ENCODE measurements at regions of chr2 and their contacts with region 1.

Region 1: DNA sequence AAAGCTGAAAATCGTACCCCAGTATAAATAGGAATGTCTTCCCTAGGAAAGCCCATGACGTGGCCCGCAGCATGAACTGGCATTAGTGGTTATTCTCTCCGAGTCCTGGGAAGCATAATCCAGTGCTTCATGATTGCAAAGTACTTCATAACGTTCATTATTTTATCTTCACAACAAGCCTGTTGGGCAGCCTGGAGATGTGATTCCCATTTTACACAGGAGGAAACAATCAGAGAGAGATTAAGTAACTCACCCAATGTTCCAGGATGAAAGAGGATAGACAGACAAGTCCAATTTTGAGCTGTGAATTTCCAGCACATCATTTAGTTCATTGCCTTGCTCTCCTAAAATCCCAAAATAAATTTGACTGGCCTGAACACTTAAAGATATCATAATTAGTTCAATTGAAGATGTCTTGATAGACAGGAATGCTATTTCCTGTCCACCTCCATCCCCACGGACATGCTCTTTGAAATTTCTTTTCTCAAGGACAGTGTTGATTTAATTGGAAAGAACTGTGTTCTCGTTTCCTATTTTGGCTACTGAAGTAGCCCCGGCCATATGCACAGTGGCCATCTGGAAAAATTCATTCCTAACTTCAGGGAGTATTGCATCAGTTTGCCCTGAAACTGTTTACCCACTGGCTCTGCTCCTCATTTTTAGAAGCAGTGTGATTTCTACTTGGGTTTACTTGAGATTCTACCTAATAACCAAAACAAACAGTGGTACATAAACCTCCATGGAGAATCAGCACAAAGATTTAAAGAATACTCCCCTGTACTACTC is 93.9 kb downstream of the VWC2L start:
- DNase-seq: no peak
- H3K4me3 ChIP-seq: no peak overlapping the region
- H3K27ac ChIP-seq: no peak overlapping the region
- H3K4me1 ChIP-seq: no peaks in the 10 kb centered on the region
- H3K27me3 ChIP-seq: no peaks in the 10 kb centered on the region
- CTCF ChIP-seq: no peak
- POLR2A ChIP-seq: no peak

Region 2: DNA sequence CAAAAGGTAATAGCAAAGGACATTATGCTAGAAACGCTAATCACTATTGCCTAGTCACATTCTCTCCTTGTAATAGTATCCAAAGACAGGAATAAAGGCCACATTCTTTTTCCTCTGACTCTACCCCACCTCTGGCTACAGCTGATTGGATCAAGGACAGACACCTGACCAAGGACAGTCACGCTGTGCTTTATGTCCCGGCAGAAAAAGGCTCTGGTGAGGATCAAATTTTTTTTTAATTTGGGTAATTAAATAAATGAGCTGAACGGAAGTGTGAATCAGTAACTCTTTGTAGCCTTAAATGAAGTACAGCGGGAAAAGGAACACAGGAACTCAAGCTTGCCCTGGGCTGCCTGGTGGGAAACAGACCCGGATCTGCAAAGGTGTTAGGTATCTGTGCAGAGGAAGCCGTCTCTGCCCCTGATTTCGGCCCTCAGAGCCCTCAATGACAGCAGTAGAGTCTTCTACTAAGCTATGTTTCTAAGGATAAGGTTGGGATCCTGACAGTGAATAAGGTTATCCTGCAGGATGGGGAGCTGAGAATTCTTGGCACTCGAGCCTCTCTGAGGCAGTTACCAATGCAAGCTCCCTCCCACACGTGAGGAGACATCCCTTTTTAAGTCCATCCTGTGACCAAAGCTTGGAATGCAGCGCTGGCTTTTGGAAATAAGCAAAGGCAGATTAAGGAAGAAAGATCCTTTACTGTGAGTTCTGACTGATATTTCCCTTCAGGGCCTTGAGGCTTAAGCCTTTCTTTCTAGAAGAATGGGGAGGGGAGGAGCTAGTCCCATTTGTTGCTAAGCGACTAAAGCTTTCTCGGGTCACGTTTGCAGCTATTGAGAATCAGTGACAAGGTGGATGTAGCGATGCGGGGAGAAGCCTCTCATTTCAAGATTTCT is 1315.5 kb before region 1 on chr2:
- intact Hi-C with region 1: loop called (anchors 5 kb)
- DNase-seq: no peak
- H3K4me3 ChIP-seq: no peak overlapping the region
- H3K27ac ChIP-seq: no peak overlapping the region
- H3K4me1 ChIP-seq: no peaks in the 10 kb centered on the region
- H3K27me3 ChIP-seq: no peaks in the 10 kb centered on the region
- CTCF ChIP-seq: no peak
- POLR2A ChIP-seq: no peak

Region 3: GRCh38 chr2:214401580-214401979 is 103.2 kb before region 1 on chr2:
- intact Hi-C with region 1: no loop called
- DNase-seq: no peak
- H3K4me3 ChIP-seq: no peak overlapping the region
- H3K27ac ChIP-seq: no peak overlapping the region
- H3K4me1 ChIP-seq: no peaks in the 10 kb centered on the region
- H3K27me3 ChIP-seq: no peaks in the 10 kb centered on the region
- CTCF ChIP-seq: no peak
- POLR2A ChIP-seq: no peak

Measured in vagina (tissue), 2 donors.